Endothelial cell of umbilical vein (primary cell): ENCODE measurements at regions of chr2 and their contacts with region 1.

Region 1: GRCh38 chr2:106542811-106543259 is 55.7 kb downstream of the CD8B2 start:
- DNase-seq: peak; percentile 62
- H3K4me3 ChIP-seq: no peak overlapping the region
- H3K27ac ChIP-seq: no peak overlapping the region
- H3K4me1 ChIP-seq: no peaks in the 10 kb centered on the region
- H3K27me3 ChIP-seq: no peaks in the 10 kb centered on the region
- CTCF ChIP-seq: peak; percentile 71 to 85
- POLR2A ChIP-seq: no peak

Region 2: DNA sequence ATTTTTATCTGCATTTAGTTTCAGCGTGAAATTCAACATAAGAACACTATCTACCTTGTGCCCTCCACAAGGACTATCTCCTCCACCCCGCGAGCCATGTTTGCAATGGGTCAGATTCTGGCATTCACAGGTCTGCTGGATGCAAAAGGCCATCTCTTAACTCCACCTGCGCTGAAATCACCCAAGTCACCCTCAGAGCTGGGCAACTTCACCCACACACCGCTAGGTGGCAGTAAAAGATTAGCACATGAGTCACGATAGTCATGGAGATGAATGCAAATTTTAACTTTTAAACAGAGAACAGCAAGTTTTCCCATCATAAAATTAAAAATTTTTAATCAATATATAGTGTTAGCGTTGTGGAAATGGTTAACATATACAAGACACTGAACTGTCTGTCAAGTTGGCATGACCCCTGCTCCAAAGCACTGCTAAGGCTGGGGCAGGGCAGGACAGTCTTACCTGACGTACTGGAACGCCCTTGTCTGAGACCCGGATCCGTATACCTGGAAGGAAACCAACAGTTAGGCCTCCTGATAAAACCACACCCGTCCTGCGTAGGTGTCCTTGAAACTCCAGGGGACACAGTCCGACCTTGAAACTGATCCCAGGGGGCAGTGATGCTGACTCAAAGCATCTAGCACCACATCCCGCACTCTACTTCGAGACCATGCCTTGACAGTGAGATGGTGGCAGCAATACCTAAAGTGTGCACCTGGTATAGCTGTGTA is 438.3 kb before region 1 on chr2:
- CTCF ChIA-PET with region 1: interaction called, 13 read pairs
- POLR2A ChIA-PET with region 1: no interaction called
- dilution Hi-C with region 1: no loop called
- intact Hi-C with region 1: loop called (anchors 1 kb)
- DNase-seq: peak; percentile 63
- H3K4me3 ChIP-seq: no peak overlapping the region
- H3K27ac ChIP-seq: no peak overlapping the region
- H3K4me1 ChIP-seq: no peaks in the 10 kb centered on the region
- H3K27me3 ChIP-seq: no peaks in the 10 kb centered on the region
- CTCF ChIP-seq: peak; percentile 78 to 91
- POLR2A ChIP-seq: no peak